Right ventricle myocardium superior (tissue), 1 donor: ENCODE measurements at regions of chr10 and their contacts with region 1.

Region 1: DNA sequence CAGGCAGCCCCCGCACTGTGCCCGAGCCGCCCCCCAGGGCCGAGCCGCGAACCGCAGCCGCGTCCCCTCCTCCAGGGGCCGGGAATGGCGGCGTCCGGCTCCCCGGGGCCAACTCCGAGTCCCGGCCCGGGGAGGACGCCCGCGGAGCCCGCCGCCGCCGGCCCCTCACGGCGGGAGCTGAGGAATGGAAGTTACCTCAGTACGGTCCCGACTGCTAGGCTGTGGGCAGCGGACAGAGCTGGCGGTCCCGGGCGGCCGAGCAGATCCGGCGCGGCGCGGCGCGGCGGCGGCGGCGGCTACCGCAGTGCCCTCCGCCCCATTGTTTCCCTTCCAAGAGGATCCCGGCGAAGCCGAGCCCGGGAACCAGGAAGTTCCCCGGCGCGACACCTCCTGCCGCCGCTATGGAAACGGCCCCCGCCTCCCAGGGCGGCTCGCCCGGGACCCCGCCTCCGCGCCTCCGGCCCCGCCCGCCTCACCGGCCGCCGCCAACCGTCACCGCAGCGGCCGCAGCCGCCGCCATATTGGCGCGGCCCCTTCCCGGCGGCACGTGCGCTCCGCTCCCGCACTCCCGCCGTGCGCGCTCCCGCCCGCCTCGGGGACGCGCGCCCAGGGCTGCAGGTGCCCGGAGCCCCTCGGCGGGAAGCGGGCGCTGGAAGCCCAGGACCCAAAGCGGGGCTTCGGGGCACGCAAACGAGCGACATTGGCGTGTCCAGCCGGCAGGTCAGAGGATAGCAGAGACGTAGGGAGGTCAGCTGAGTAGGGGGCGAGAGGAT is at the start of gene USP6NL:
- DNase-seq: peak; percentile 93
- ATAC-seq: peak; percentile 99
- total RNA-seq, gene USP6NL: 5.2 TPM

Region 2: GRCh38 chr10:11355592-11355991 is 255.8 kb before region 1 on chr10:
- intact Hi-C with region 1: no loop called
- DNase-seq: no peak
- ATAC-seq: no peak

Region 3: GRCh38 chr10:11525503-11525902 is 85.9 kb before region 1 on chr10:
- intact Hi-C with region 1: loop called (anchors 10 kb)
- DNase-seq: peak; percentile 84
- ATAC-seq: peak; percentile 71

Region 4: GRCh38 chr10:11757821-11758463 is 146.5 kb after region 1 on chr10:
- intact Hi-C with region 1: loop called (anchors 10 kb)
- DNase-seq: peak; percentile 93
- ATAC-seq: peak; percentile 85